CD8-positive, alpha-beta memory T cell (primary cell): ENCODE measurements at regions of chr9 and their contacts with region 1.

Region 1: DNA sequence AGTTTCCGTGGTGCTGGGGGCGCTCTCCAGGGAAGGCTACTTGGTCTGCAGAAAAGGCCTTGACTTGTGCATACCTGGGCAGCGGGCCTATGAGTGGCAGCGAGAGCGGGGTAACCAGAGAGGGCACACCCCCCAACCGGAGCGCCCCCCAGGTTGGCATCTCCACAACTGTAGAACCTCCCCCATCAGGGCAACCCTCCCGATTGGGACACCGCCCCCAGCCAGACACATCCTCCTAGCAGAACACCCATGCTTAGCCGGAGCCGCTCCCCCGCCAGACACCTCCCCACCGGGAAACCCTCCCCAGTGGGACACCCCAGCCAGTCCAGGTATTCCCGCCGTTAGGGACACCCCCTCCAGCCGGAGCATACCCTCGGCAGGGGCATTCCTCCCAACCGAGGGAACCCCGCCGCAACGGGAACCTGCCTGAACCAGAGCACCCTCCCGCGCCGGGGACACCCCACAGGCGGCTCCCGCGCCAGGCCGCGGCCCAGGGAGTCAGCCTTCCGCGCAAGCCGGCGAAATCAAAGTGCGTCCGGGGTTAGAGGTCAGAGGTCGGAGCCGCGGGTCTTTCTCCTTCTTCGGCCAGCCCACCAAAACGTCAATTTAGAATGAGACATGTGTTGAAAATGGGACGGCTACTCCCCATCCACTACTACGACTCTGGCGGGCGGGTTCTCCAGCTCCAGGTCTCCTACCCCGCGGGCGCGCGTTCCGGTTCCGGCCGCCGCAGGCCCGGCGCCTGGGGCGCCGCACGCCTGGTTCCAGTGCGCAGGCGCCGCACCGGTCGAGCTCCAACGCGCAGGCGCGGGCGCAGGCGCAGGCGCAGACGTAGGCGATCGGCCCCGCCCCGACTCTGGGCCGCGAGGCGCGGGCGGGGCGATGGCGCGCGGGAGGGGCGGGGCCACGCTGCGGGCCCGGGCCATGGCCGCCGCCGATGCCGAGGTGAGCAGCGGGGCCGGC is at the start of gene EHMT1:
- DNase-seq: peak; percentile 87 to 94 (median 91)
- H3K4me3 ChIP-seq: peak within 1 kb of the TSS; percentile 94
- H3K4me3 Mint-ChIP-seq: peak within 1 kb of the TSS; percentile 83 to 94 (median 90)
- H3K27ac ChIP-seq: peak within 1 kb of the TSS; percentile 93
- H3K27ac Mint-ChIP-seq: peak within 1 kb of the TSS; percentile 89 to 99 (median 95)
- H3K4me1 ChIP-seq: peaks cover 32% of the 10 kb centered on the region
- H3K4me1 Mint-ChIP-seq: peaks cover 36 to 44% (median 41%) of the 10 kb centered on the region in 3 donors
- H3K27me3 ChIP-seq: no peaks in the 10 kb centered on the region
- H3K27me3 Mint-ChIP-seq: no peaks in the 10 kb centered on the region
- total RNA-seq, gene EHMT1: 68.9 to 74.6 TPM

Region 2: GRCh38 chr9:137267933-137268355 is 350.4 kb before region 1 on chr9:
- CTCF ChIA-PET with region 1: no interaction called
- POLR2A ChIA-PET with region 1: no interaction called
- DNase-seq: no peak
- H3K4me3 ChIP-seq: no peak overlapping the region
- H3K4me3 Mint-ChIP-seq: no peak overlapping the region
- H3K27ac ChIP-seq: peak overlapping the region; percentile 5
- H3K27ac Mint-ChIP-seq: peak overlapping the region in 2 of 8 donors; percentile 25 to 75
- H3K4me1 ChIP-seq: peaks cover 14% of the 10 kb centered on the region
- H3K4me1 Mint-ChIP-seq: peaks cover 6 to 11% (median 10%) of the 10 kb centered on the region in 3 donors
- H3K27me3 ChIP-seq: no peaks in the 10 kb centered on the region
- H3K27me3 Mint-ChIP-seq: no peaks in the 10 kb centered on the region

Region 3: GRCh38 chr9:137605121-137606004 is 13.0 kb before region 1 on chr9 and contains the start of gene ARRDC1:
- CTCF ChIA-PET with region 1: interaction called, 4 read pairs
- POLR2A ChIA-PET with region 1: interaction called, 10 read pairs
- DNase-seq: peak; percentile 86 to 97 (median 91)
- H3K4me3 ChIP-seq: peak within 1 kb of the TSS; percentile 56
- H3K4me3 Mint-ChIP-seq: peak within 1 kb of the TSS; percentile 37 to 91 (median 80)
- H3K27ac ChIP-seq: peak within 1 kb of the TSS; percentile 67
- H3K27ac Mint-ChIP-seq: peak within 1 kb of the TSS in 2 of 8 donors; percentile 60 to 75
- H3K4me1 ChIP-seq: peaks cover 14% of the 10 kb centered on the region
- H3K4me1 Mint-ChIP-seq: peaks cover 14 to 31% (median 17%) of the 10 kb centered on the region in 3 donors
- H3K27me3 ChIP-seq: no peaks in the 10 kb centered on the region
- H3K27me3 Mint-ChIP-seq: no peaks in the 10 kb centered on the region
- total RNA-seq, gene ARRDC1: 30.8 to 35.2 TPM

Region 4: DNA sequence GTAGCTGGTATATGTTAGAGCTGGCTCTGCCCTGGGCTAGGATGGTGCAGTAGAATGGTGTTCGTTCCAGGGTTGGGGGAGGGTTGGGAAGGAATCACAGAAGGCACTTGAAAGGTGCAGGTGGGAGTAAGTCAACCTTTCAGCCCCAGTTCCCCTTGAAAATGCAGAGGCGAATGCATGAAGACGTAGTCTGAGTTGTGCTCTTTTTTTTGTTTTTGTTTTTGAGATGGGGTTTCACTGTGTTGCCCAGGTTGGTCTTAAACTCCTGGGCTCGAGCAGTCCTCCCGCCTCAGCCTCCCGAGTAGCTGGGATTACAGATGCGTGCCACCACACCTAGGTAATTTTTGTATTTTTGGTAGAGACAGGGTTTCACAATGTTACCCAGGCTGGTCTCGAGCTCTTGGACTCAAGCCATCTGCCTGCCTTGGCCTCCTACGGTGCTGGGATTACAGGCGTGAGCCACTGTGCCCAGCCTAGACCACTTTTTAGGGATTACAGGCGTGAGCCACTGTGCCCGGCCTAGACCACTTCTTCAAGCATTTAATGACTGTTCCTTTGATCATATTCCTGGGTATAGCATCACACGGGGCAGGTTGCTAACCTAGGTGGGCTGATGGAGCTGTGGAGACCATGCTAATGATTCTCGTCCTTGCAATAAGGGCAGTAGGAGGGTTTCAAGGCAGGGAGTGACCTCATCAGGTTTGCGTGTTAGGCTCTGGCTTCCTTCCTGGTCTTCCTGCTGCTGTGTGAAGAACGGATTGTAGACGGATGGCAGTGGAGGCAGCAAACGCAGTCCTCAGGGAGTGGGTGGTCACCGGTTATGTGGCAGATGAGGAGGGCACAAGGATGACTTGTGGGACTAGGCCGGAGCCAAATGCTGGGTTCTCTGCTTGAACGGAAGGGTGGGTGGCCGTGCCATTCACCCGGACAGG is 14.1 kb after region 1 on chr9:
- CTCF ChIA-PET with region 1: interaction called, 7 read pairs
- POLR2A ChIA-PET with region 1: interaction called, 20 read pairs
- DNase-seq: no peak
- H3K4me3 ChIP-seq: no peak overlapping the region
- H3K4me3 Mint-ChIP-seq: peak overlapping the region in 1 of 7 donors; percentile 18
- H3K27ac ChIP-seq: no peak overlapping the region
- H3K27ac Mint-ChIP-seq: peak overlapping the region in 7 of 8 donors; percentile 8 to 80 (median 52)
- H3K4me1 ChIP-seq: peaks cover 32% of the 10 kb centered on the region
- H3K4me1 Mint-ChIP-seq: peaks cover 54 to 78% (median 68%) of the 10 kb centered on the region in 3 donors
- H3K27me3 ChIP-seq: no peaks in the 10 kb centered on the region
- H3K27me3 Mint-ChIP-seq: no peaks in the 10 kb centered on the region

Region 5: GRCh38 chr9:137689745-137690529 is 71.6 kb after region 1 on chr9:
- CTCF ChIA-PET with region 1: no interaction called
- POLR2A ChIA-PET with region 1: no interaction called
- DNase-seq: no peak
- H3K4me3 ChIP-seq: no peak overlapping the region
- H3K4me3 Mint-ChIP-seq: peak overlapping the region in 1 of 7 donors; percentile 20
- H3K27ac ChIP-seq: no peak overlapping the region
- H3K27ac Mint-ChIP-seq: peak overlapping the region in 2 of 8 donors; percentile 50 to 57
- H3K4me1 ChIP-seq: peaks cover 11% of the 10 kb centered on the region
- H3K4me1 Mint-ChIP-seq: peaks cover 61 to 81% (median 75%) of the 10 kb centered on the region in 3 donors
- H3K27me3 ChIP-seq: no peaks in the 10 kb centered on the region
- H3K27me3 Mint-ChIP-seq: no peaks in the 10 kb centered on the region